Activated B cell treated with CpG ODN at 0.5 μM for 24 hours (primary cell): ENCODE measurements at regions of chr11 and their contacts with region 1.

Region 1: GRCh38 chr11:117178210-117179034 is at the start of gene SIDT2:
- DNase-seq: peak; percentile 80
- ATAC-seq: peak; percentile 88
- H3K4me3 Mint-ChIP-seq: peak within 1 kb of the TSS; percentile 96
- H3K27ac Mint-ChIP-seq: peak within 1 kb of the TSS; percentile 91
- H3K4me1 Mint-ChIP-seq: peaks cover 34% of the 10 kb centered on the region
- H3K27me3 Mint-ChIP-seq: no peaks in the 10 kb centered on the region
- CTCF ChIP-seq: no peak
- total RNA-seq, gene SIDT2: 96.7 and 115 TPM in 2 replicates

Region 2: GRCh38 chr11:116772443-116773202 is 405.8 kb before region 1 on chr11 and contains the start of gene BUD13:
- CTCF ChIA-PET with region 1: no interaction called
- POLR2A ChIA-PET with region 1: interaction called, 4 read pairs
- intact Hi-C with region 1: loop called (anchors 2 kb)
- DNase-seq: peak; percentile 96
- ATAC-seq: peak; percentile 89
- H3K4me3 Mint-ChIP-seq: peak within 1 kb of the TSS; percentile 98
- H3K27ac Mint-ChIP-seq: peak within 1 kb of the TSS; percentile 96
- H3K4me1 Mint-ChIP-seq: peaks cover 37% of the 10 kb centered on the region
- H3K27me3 Mint-ChIP-seq: no peaks in the 10 kb centered on the region
- CTCF ChIP-seq: no peak
- total RNA-seq, gene BUD13: 18.4 and 18.8 TPM in 2 replicates

Region 3: DNA sequence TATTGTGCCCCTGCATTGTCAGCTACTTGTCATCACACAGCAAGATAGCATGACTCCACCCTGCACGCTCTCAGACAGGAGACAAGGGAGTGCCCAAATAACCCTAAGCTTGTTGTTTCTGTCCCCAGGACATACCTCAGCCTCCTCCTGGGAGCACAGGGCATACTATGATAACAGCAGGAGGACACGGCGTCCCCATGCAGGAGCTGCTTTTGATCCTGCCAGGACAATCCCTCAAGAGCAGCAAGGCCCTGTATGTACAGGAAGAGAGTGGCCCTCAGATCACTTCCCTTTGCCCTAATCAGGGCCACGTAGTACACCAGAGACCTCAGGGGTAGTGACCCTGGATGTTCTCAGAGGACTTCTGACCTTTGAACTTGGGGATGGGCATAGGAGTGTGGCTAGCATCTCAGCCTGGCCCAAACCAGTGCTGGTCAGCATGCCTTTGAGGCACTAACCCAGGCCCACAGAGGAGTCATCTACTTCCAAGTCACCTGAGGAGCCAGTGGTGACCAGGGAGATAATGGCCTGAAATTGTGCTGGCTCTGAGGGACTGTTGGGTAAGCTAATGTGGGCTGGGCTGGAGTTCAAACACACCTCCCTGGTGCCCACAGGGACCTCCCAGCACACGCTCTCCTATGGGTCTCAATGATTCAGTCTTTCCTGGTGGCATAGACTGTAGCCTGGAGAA is 364.5 kb before region 1 on chr11:
- CTCF ChIA-PET with region 1: no interaction called
- POLR2A ChIA-PET with region 1: no interaction called
- intact Hi-C with region 1: no loop called
- DNase-seq: no peak
- ATAC-seq: no peak
- H3K4me3 Mint-ChIP-seq: no peak overlapping the region
- H3K27ac Mint-ChIP-seq: no peak overlapping the region
- H3K4me1 Mint-ChIP-seq: no peaks in the 10 kb centered on the region
- H3K27me3 Mint-ChIP-seq: peaks cover 5% of the 10 kb centered on the region
- CTCF ChIP-seq: no peak

Region 4: GRCh38 chr11:117037279-117037974 is 141.0 kb before region 1 on chr11:
- CTCF ChIA-PET with region 1: no interaction called
- POLR2A ChIA-PET with region 1: no interaction called
- intact Hi-C with region 1: no loop called
- DNase-seq: no peak
- ATAC-seq: no peak
- H3K4me3 Mint-ChIP-seq: peak overlapping the region; percentile 48
- H3K27ac Mint-ChIP-seq: peak overlapping the region; percentile 83
- H3K4me1 Mint-ChIP-seq: peaks cover 59% of the 10 kb centered on the region
- H3K27me3 Mint-ChIP-seq: no peaks in the 10 kb centered on the region
- CTCF ChIP-seq: no peak

Region 5: GRCh38 chr11:117143871-117144476 is 34.4 kb before region 1 on chr11 and contains the start of gene PAFAH1B2:
- CTCF ChIA-PET with region 1: interaction called, 16 read pairs
- POLR2A ChIA-PET with region 1: interaction called, 79 read pairs
- intact Hi-C with region 1: loop called (anchors 1 kb)
- DNase-seq: peak; percentile 95
- ATAC-seq: peak; percentile 84
- H3K4me3 Mint-ChIP-seq: peak within 1 kb of the TSS; percentile 95
- H3K27ac Mint-ChIP-seq: peak within 1 kb of the TSS; percentile 95
- H3K4me1 Mint-ChIP-seq: peaks cover 40% of the 10 kb centered on the region
- H3K27me3 Mint-ChIP-seq: peaks cover 5% of the 10 kb centered on the region
- CTCF ChIP-seq: no peak
- total RNA-seq, gene PAFAH1B2: 71.3 and 78.7 TPM in 2 replicates

Region 6: GRCh38 chr11:117189191-117189930 is 10.9 kb after region 1 on chr11:
- CTCF ChIA-PET with region 1: interaction called, 5 read pairs
- POLR2A ChIA-PET with region 1: interaction called, 63 read pairs
- intact Hi-C with region 1: loop called (anchors 1 kb)
- DNase-seq: peak; percentile 66
- ATAC-seq: peak; percentile 87
- H3K4me3 Mint-ChIP-seq: peak overlapping the region; percentile 74
- H3K27ac Mint-ChIP-seq: peak overlapping the region; percentile 94
- H3K4me1 Mint-ChIP-seq: peaks cover 78% of the 10 kb centered on the region
- H3K27me3 Mint-ChIP-seq: no peaks in the 10 kb centered on the region
- CTCF ChIP-seq: no peak

Region 7: DNA sequence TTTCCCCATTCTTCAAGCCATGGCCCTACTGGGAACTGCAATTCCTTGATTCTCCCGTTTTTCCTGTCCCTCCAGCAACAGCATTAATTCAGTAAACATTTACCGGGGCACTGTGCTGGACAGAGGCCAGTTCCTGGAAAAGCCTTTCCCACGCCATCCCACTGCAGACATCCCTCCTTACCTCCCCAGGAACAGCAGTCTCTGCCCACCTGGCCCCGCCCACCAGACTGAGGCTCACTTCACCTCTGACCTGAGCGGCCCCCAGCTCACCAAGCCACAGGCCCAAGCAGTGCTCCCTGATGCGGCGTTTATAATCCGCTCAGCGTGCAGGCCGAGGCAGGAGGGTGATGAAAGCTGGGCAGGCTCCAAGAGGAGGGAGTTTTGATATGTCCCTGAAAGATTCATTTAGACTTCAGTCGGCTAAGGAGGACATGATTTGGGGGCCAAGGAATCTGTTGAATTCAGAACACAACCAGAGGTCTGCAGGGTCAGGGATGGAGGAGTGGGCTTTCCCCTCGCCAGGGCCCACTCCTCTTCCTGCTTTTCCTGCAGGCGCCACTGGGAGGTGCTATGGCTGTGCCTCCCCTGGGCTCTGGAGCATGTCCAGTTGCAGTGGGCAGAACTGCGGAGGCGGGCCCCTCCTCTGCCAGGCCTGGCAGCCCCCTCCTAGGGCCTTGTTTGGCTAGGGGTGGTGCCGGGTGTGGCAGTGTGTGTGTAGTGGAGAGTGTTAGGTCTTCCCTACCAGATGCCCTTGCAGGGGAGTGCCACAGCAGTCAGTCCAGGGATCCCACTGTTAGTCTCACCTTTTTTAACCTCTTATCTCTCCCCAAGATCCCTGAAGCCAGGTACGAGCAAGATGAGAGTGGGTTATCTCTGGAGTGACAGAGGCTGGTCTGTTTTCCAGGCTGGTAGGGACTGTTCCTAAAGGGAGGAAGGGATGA is 19.4 kb after region 1 on chr11:
- CTCF ChIA-PET with region 1: interaction called, 13 read pairs
- POLR2A ChIA-PET with region 1: interaction called, 12 read pairs
- intact Hi-C with region 1: loop called (anchors 2 kb)
- DNase-seq: no peak
- ATAC-seq: no peak
- H3K4me3 Mint-ChIP-seq: no peak overlapping the region
- H3K27ac Mint-ChIP-seq: peak overlapping the region; percentile 50
- H3K4me1 Mint-ChIP-seq: peaks cover 39% of the 10 kb centered on the region
- H3K27me3 Mint-ChIP-seq: no peaks in the 10 kb centered on the region
- CTCF ChIP-seq: no peak

Region 8: DNA sequence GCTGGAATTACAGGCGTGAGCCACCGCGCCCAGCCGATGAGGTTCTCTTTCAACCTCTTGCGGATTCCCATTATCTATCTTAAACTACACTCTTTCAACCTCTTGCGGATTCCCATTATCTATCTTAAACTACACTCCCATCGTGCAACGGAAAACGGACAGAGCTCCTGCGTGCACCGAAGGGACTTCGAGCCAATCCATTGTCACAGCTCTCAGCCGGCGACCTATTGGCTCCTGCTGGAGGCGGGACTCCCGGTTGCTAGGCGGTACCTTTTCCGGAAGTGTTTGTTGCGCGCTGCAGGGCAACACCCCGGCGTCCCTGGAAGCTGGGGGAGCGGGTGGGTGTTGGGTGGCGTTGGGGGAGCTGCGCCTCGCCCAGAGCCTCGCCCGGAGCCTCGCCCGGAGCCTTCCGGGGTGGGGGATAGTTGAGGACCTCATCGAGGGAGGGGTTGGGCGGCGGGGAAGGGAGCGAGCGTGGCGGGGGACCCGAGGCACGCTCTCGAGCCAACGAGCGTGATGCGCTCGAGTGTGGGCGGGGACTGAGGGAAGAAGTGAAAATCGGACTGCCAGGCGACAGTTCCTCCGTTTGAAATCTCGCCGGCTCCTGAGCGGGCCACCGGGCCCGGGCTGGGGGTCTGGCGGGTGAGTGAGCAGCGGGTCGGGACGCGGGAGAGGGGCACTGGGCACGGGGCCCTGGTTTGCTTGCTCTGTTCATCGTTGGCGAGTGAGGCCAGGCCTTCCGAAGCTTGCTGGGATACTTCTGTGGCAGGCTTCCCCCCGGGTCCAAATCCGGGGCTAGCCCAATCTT is 149.3 kb after region 1 on chr11 and contains the start of gene CEP164:
- CTCF ChIA-PET with region 1: no interaction called
- POLR2A ChIA-PET with region 1: interaction called, 4 read pairs
- intact Hi-C with region 1: loop called (anchors 2 kb)
- DNase-seq: peak; percentile 89
- ATAC-seq: peak; percentile 92
- H3K4me3 Mint-ChIP-seq: peak within 1 kb of the TSS; percentile 59
- H3K27ac Mint-ChIP-seq: no peak within 1 kb of the TSS
- H3K4me1 Mint-ChIP-seq: peaks cover 2% of the 10 kb centered on the region
- H3K27me3 Mint-ChIP-seq: no peaks in the 10 kb centered on the region
- CTCF ChIP-seq: no peak
- total RNA-seq, gene CEP164: 42.9 and 50.9 TPM in 2 replicates